Endothelial cell of umbilical vein (primary cell): ENCODE measurements at regions of chrX and their contacts with region 1.

Region 1: GRCh38 chrX:129982274-129983251 is at the start of gene BCORL1:
- DNase-seq: peak; percentile 92
- H3K4me3 ChIP-seq: peak within 1 kb of the TSS; percentile 44 to 51 (median 50)
- H3K27ac ChIP-seq: no peak within 1 kb of the TSS
- H3K4me1 ChIP-seq: peaks cover 11% of the 10 kb centered on the region
- H3K27me3 ChIP-seq: no peaks in the 10 kb centered on the region
- CTCF ChIP-seq: no peak
- POLR2A ChIP-seq: peak; percentile 62
- total RNA-seq, gene BCORL1: 13.1 and 16.7 TPM in 2 replicates

Region 2: DNA sequence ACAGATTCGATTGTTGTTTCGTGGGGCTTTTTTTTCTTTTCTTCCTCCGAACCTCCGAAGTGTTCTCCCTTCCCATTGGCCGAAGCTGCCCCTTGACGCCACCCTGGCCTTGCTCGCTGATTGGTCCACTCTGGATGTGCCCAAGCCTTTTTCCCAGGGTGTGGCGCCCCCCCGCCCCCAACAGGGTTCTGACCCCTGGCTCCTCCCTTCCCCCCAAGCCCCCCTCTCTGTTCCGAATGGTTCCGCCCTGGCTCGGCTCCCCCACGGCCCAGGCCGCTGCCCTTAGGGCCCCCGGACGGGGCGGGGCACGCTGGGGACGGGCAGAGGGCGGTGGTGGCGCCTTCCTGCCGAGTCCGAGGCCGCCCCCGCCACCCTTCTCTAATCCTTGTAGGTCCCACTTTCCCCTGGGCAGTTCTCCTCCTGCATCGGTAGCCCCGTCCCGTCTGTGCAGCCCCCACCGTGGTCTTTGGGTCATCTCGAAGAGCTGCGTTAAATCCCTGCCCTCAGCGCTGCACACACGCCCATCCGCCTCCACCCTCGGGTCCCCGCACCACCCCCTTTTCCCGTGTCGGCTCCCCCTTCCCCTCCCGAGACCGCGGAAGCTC is 51.0 kb before region 1 on chrX:
- CTCF ChIA-PET with region 1: interaction called, 3 read pairs
- POLR2A ChIA-PET with region 1: no interaction called
- dilution Hi-C with region 1: no loop called
- intact Hi-C with region 1: loop called (anchors 1 kb)
- DNase-seq: peak; percentile 78
- H3K4me3 ChIP-seq: peak overlapping the region; percentile 69 to 74 (median 71)
- H3K27ac ChIP-seq: peak overlapping the region; percentile 68
- H3K4me1 ChIP-seq: peaks cover 6% of the 10 kb centered on the region
- H3K27me3 ChIP-seq: peaks cover 4 to 8% of the 10 kb centered on the region in 2 experiments
- CTCF ChIP-seq: no peak
- POLR2A ChIP-seq: peak; percentile 11

Region 3: DNA sequence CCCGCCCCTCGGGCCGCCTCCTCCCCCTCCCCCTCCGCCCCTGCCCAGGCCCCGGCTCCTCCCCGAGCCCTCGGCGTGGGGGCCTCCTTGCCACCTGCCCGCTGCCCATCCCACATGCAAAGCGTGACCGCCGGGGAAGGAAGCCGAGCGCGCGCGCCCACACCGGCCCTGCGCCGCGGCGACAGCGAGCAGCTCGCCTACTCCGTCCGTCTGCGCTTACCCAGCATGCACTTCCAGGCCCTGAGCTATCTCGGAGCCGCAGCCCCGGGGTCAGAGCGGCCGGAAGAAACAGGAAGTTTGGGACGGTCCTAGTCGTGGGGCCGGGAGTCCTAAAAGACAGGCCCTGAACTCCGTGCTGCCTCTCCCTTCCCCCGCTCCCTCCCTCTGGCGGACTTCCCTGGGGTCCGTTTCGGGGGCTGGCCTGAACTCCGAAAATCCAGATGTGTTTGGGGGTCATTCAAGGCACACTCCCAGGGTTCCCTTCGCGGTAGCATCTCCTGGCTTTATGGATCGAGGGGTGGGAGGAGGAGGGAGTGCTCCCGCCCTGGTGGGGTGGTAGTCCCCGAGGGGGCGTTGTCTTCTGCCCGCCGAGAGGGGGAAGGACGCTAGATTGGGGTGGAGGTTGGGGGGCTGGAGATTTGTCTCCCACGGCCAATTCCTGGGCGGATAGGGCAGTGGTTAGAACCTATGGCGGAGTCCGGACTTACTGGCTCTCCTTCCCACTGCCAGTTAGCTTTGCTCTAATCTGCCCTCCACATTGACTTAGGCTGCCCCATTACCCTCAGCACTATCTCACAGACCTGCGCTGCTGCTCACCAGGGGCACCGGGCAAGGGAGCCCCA is 25.1 kb before region 1 on chrX:
- CTCF ChIA-PET with region 1: no interaction called
- POLR2A ChIA-PET with region 1: no interaction called
- dilution Hi-C with region 1: no loop called
- intact Hi-C with region 1: loop called (anchors 2 kb)
- DNase-seq: peak; percentile 18
- H3K4me3 ChIP-seq: peak overlapping the region in 2 of 3 experiments; percentile 26 to 32
- H3K27ac ChIP-seq: no peak overlapping the region
- H3K4me1 ChIP-seq: peaks cover 9% of the 10 kb centered on the region
- H3K27me3 ChIP-seq: no peaks in the 10 kb centered on the region
- CTCF ChIP-seq: no peak
- POLR2A ChIP-seq: no peak

Region 4: DNA sequence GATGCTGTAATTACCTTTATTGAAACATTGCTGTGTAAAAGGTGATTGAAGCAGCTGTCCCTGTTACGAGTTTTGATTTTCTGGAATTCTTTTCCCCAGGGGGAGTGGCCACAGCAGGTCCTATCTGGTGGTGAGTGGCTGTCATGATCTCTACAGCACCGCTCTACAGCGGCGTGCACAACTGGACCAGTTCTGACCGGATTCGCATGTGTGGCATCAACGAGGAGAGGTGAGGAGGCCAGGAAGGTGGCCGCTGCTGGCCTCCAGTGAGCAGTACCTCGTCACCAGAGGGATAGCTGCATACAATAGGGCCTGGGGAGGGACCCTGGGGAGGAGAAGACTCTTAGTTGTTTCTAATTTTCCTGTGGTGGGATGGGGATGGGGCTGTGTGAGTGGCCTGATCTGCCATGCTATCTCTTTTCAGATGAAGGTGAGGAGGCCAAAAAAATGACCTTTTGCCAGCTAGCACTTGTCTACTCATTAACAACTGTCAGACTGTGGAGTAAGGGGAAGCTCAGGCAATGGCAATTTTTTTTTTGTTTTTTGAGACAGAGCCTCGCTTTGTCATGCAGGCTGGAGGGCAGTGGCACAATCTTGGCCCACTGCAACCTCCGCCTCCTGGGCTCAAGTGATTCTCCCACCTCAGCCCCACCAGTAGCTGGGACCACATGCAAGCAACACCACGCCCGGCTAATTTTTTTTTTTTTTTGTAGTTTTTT is 22.7 kb after region 1 on chrX:
- CTCF ChIA-PET with region 1: no interaction called
- POLR2A ChIA-PET with region 1: no interaction called
- dilution Hi-C with region 1: no loop called
- intact Hi-C with region 1: no loop called
- DNase-seq: no peak
- H3K4me3 ChIP-seq: no peak overlapping the region
- H3K27ac ChIP-seq: no peak overlapping the region
- H3K4me1 ChIP-seq: no peaks in the 10 kb centered on the region
- H3K27me3 ChIP-seq: no peaks in the 10 kb centered on the region
- CTCF ChIP-seq: no peak
- POLR2A ChIP-seq: no peak